Activated CD4-positive, alpha-beta T cell treated with anti-CD3 and anti-CD28 coated beads, Interleukin-2, amount 10 ng/mL, durations not matched to agents 24 days and 14 days (primary cell): ENCODE measurements at regions of chr2 and their contacts with region 1.

Region 1: GRCh38 chr2:147231607-147232006 is 613.2 kb upstream of the ACVR2A start:
- DNase-seq: no peak
- H3K4me3 Mint-ChIP-seq: no peak overlapping the region
- H3K27ac Mint-ChIP-seq: no peak overlapping the region
- H3K4me1 Mint-ChIP-seq: no peaks in the 10 kb centered on the region
- H3K27me3 Mint-ChIP-seq: no peaks in the 10 kb centered on the region

Region 2: DNA sequence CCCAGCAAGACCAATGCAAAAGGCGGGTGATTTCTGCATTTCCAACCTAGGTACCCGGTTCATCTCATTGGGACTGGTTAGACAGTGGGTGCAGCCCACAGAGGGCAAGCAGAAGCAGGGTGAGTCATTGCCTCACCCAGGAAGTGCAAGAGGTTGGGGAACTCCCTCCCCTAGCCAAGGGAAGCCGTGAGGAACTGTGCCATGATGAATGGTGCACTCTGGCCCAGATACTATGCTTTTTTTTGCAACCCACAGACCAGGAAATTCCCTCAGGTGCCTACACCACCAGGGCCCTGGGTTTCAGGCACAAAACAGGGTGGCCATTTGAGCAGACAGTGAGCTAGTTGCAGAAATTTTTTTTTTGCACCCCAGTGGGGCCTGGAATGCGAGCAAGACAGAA is 49.3 kb before region 1 on chr2:
- intact Hi-C with region 1: loop called (anchors 5 kb)
- DNase-seq: peak; percentile 86
- H3K4me3 Mint-ChIP-seq: peak overlapping the region; percentile 68
- H3K27ac Mint-ChIP-seq: peak overlapping the region; percentile 90
- H3K4me1 Mint-ChIP-seq: peaks cover 21% of the 10 kb centered on the region
- H3K27me3 Mint-ChIP-seq: peaks cover 2% of the 10 kb centered on the region

Region 3: DNA sequence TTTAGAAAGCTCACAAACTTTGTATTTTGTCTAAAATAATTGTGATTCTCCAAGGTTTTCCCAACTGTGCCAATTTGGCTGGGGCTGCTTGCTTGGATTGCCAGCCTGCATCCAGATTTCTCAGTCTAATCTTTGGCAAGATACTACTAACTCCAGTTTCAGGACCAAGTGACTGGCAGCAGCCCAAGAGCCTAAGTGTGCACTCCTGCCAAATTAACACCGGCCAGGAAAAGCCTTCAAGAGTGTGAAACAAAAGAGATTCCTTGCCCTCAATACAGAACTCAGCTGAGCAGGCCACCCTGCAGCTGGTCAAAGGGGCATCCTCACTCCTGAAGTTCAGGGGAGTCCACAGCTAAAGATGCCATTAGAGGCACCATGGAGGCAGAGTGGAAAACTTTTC is 24.2 kb after region 1 on chr2:
- intact Hi-C with region 1: no loop called
- DNase-seq: no peak
- H3K4me3 Mint-ChIP-seq: no peak overlapping the region
- H3K27ac Mint-ChIP-seq: no peak overlapping the region
- H3K4me1 Mint-ChIP-seq: no peaks in the 10 kb centered on the region
- H3K27me3 Mint-ChIP-seq: peaks cover 2% of the 10 kb centered on the region